Caco-2 (cell line): ENCODE measurements at regions of chr11 and their contacts with region 1.

Region 1: GRCh38 chr11:57277845-57278709 is 41.0 kb upstream of the APLNR start:
- DNase-seq: peak; percentile 83 to 84
- H3K4me3 ChIP-seq: peak overlapping the region; percentile 31
- H3K4me3 Mint-ChIP-seq: peak overlapping the region; percentile 69
- H3K27ac Mint-ChIP-seq: peak overlapping the region; percentile 78
- H3K4me1 ChIP-seq: peaks cover 10% of the 10 kb centered on the region
- H3K4me1 Mint-ChIP-seq: peaks cover 15% of the 10 kb centered on the region
- H3K27me3 ChIP-seq: no peaks in the 10 kb centered on the region
- H3K27me3 Mint-ChIP-seq: peaks cover 3% of the 10 kb centered on the region
- CTCF ChIP-seq: peak; percentile 80 to 93

Region 2: DNA sequence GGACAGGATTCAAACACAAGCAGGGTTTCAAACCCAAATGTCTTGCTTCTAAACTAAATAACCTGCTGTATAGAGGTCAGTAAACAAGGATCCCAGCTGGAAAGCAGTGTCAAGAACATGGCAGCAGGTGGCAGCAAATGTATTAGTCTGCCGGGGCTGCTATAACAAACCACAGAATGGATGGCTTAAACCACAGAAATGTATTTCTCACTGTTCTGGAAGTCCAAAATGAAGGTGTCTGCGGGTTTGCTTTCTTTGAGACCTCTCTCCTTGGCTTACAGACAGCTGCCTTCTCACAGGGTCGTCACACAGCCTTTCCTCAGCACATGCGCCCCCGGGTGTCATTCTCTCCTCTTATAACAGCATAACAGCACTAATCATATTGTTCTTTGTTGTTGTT is 161.4 kb before region 1 on chr11:
- CTCF ChIA-PET with region 1: no interaction called
- POLR2A ChIA-PET with region 1: no interaction called
- intact Hi-C with region 1: loop called (anchors 1 kb)
- DNase-seq: peak; percentile 49 to 57
- H3K4me3 ChIP-seq: no peak overlapping the region
- H3K4me3 Mint-ChIP-seq: no peak overlapping the region
- H3K27ac Mint-ChIP-seq: no peak overlapping the region
- H3K4me1 ChIP-seq: no peaks in the 10 kb centered on the region; the same call in 1 of the 2 replicates
- H3K4me1 Mint-ChIP-seq: no peaks in the 10 kb centered on the region
- H3K27me3 ChIP-seq: no peaks in the 10 kb centered on the region
- H3K27me3 Mint-ChIP-seq: peaks cover 6% of the 10 kb centered on the region
- CTCF ChIP-seq: peak; percentile 60 to 74

Region 3: DNA sequence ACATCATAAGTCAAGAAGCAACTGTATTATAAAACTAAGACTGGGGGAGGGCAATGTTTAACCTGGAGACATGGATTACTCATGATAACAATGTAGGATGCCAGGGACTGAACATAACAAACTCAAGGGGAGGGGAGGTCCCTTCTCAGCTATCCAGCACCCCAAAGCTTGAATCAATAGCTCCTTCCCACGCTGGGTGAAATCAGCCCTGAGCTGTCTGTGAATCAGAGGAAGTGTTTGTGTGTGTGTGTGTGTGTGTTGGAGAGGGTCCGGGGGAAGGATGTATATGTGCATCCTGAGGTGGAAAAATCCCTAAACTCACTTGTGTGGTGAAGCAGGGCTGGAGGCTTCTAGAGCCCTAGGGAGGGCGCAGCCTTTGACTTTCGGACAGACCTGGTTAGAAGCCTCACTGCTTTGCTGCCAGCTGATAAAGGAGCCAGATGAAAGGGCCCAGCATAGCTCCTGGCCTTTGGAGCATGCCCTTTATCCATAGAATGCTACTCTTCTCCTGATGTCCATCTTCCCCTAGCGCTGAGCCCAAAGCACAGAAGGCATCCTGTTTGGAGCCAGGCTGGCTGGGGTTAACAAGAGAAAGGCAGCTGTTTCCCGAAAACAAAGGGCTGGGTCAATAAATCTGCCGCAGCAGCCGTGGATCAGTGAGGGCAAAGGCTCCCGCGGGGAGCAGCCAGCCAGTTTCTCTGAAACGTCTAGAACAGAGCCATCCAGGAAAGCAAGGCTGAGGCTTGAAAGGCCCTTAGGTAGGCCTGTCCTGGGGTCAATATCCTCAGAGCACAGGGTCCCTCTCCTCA is 10.9 kb after region 1 on chr11:
- CTCF ChIA-PET with region 1: interaction called, 6 read pairs
- POLR2A ChIA-PET with region 1: no interaction called
- intact Hi-C with region 1: loop called (anchors 1 kb)
- DNase-seq: peak in 1 of 2 experiments; percentile 51
- H3K4me3 ChIP-seq: no peak overlapping the region
- H3K4me3 Mint-ChIP-seq: peak overlapping the region; percentile 34
- H3K27ac Mint-ChIP-seq: peak overlapping the region; percentile 55
- H3K4me1 ChIP-seq: peaks cover 60% of the 10 kb centered on the region
- H3K4me1 Mint-ChIP-seq: peaks cover 55% of the 10 kb centered on the region
- H3K27me3 ChIP-seq: no peaks in the 10 kb centered on the region
- H3K27me3 Mint-ChIP-seq: no peaks in the 10 kb centered on the region
- CTCF ChIP-seq: no peak

Region 4: GRCh38 chr11:57311109-57311936 is 33.2 kb after region 1 on chr11:
- CTCF ChIA-PET with region 1: no interaction called
- POLR2A ChIA-PET with region 1: no interaction called
- intact Hi-C with region 1: loop called (anchors 1 kb)
- DNase-seq: peak; percentile 94 to 96
- H3K4me3 ChIP-seq: peak overlapping the region; percentile 55
- H3K4me3 Mint-ChIP-seq: peak overlapping the region; percentile 72
- H3K27ac Mint-ChIP-seq: peak overlapping the region; percentile 47
- H3K4me1 ChIP-seq: peaks cover 40% of the 10 kb centered on the region
- H3K4me1 Mint-ChIP-seq: peaks cover 35% of the 10 kb centered on the region
- H3K27me3 ChIP-seq: no peaks in the 10 kb centered on the region
- H3K27me3 Mint-ChIP-seq: no peaks in the 10 kb centered on the region
- CTCF ChIP-seq: no peak